Dorsolateral prefrontal cortex (tissue), 120 donors: ENCODE measurements at regions of chr1 and their contacts with region 1.

Region 1: DNA sequence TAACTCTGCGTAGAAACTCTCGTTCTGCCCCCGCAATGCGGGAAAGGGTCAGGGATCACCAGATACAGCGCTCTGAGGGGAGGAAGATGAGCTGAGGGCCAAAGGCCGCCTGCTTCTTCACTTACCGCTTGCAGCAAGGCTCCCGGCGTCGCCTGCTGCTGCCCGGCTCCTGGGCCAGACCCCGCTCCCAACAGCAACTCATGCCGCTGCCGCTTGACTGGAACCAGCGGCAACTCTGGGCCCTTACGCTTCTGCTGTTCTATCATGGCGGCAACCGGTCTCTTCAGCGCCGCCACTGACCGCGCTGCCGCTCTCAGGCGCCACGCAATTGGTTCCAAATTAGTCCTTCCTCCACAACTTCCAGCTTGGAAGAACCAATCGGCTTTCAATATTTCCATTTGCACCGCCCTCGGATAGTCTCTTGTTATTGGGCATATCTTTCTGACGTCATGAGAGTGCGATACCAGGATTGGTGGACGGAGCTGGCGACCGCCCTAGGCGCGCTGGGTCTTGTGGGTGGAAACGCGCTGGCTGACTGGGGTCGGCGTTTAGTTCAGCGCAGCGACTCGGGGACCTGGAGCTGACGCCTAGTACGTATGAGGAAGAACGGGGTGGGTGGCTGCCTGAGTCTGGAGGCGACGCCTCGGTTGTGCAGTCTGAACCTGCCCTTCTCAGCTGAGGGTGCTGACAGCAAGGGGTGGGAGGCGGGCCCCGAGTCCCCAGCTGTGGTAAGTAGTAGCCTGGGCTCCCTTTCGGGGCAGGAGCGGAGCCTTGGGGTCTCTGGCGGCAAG is at the starts of genes SNRNP40 and ZCCHC17:
- DNase-seq: peak; percentile 80 to 97 (median 94)
- H3K4me3 ChIP-seq: peak within 1 kb of the TSS; percentile 55 to 100 (median 94)
- H3K27ac ChIP-seq: peak within 1 kb of the TSS in 58 of 59 donors; percentile 8 to 97 (median 86)
- H3K27me3 ChIP-seq: no peaks in the 10 kb centered on the region
- CTCF ChIP-seq: peak in 54 of 56 donors; percentile 17 to 76 (median 48)
- total RNA-seq, gene SNRNP40: 28.0 to 64.2 (median 38.5) TPM
- total RNA-seq, gene ZCCHC17: 27.3 to 71.7 (median 48.5) TPM

Region 2: DNA sequence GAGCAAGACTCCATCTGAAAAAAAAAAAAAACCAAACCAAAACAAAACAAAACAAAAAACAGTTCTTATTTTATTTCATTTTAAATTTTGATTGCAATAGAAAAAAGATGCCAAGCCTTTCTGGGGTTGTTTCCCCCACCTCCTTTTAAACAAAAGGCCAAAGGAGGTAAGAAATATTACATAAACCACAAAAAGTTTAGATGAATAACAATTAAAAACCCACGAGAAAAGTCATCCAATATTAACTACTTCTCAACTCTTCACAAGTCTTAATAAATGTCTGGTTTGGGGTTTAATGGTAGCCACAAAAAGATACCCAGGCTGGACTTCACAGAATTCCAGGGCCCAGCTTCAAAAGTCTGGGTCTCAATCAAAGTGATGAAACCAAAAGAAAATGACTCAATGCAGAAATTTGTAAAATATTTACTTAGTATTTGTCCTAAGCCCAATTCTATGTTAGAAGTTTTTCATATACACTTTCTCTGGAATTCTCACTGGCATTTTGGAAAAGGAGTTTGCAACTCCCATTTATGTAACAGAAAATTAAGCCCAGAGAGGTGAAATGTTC is 341.1 kb before region 1 on chr1:
- intact Hi-C with region 1: no loop called
- DNase-seq: no peak
- H3K4me3 ChIP-seq: no peak overlapping the region
- H3K27ac ChIP-seq: no peak overlapping the region
- H3K27me3 ChIP-seq: no peaks in the 10 kb centered on the region
- CTCF ChIP-seq: no peak

Region 3: GRCh38 chr1:31182352-31182751 is 114.3 kb before region 1 on chr1:
- intact Hi-C with region 1: loop called (anchors 2 to 5 kb)
- DNase-seq: peak in 9 of 10 donors; percentile 26 to 85 (median 58)
- H3K4me3 ChIP-seq: peak overlapping the region in 55 of 59 donors; percentile 8 to 64 (median 42)
- H3K27ac ChIP-seq: peak overlapping the region in 9 of 59 donors; percentile 11 to 68 (median 36)
- H3K27me3 ChIP-seq: no peaks in the 10 kb centered on the region
- CTCF ChIP-seq: peak in 32 of 56 donors; percentile 8 to 47 (median 30)

Region 4: GRCh38 chr1:31239653-31240241 is 56.9 kb before region 1 on chr1 and contains the start of gene NKAIN1:
- intact Hi-C with region 1: loop called in 1 of 2 experiments (anchors 10 kb)
- DNase-seq: peak in 3 of 10 donors; percentile 24 to 72 (median 58)
- H3K4me3 ChIP-seq: peak within 1 kb of the TSS; percentile 28 to 76 (median 58)
- H3K27ac ChIP-seq: peak within 1 kb of the TSS in 30 of 59 donors; percentile 3 to 74 (median 48)
- H3K27me3 ChIP-seq: peaks cover 0 to 29% (median 0%) of the 10 kb centered on the region in 45 donors
- CTCF ChIP-seq: peak in 2 of 56 donors; percentile 11 to 26
- total RNA-seq, gene NKAIN1: 3.6 to 42.1 (median 11.7) TPM

Region 5: GRCh38 chr1:31372961-31373896 is 76.5 kb after region 1 on chr1 and contains the start of gene FABP3:
- intact Hi-C with region 1: loop called in 1 of 2 experiments (anchors 10 kb)
- DNase-seq: peak; percentile 60 to 91 (median 85)
- H3K4me3 ChIP-seq: peak within 1 kb of the TSS; percentile 29 to 83 (median 64)
- H3K27ac ChIP-seq: peak within 1 kb of the TSS; percentile 75 to 99 (median 96)
- H3K27me3 ChIP-seq: no peaks in the 10 kb centered on the region
- CTCF ChIP-seq: peak in 15 of 56 donors; percentile 2 to 36 (median 20)
- total RNA-seq, gene FABP3: 26.6 to 202 (median 90.7) TPM

Region 6: DNA sequence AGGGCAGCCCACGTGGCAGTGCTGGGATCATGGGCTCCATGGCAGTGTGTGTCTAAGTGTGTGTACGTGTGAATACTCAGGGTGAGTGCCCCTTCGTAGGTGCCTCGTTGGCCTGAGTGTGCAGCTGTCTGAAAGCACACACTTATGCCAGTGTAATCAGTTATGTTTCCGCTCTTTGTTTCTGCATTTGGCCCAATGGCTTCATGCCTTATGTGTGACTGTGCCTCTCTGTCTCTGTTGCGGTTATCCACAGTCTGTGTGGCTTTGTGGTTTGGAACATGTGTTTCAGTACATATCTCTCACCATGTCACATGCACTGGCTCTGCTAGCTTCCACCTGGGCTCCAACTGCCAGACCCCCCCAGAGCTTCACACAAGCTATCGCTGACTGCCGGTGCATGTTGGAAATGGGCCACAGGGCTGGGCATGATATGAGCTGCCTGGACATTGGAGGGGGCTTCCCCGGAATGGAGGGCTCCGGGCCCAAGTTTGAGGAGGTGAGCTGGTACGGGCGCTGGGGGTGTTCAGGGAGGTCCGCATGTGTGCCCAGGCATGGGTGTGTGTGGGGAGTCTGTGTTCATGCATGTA is 209.3 kb after region 1 on chr1:
- intact Hi-C with region 1: no loop called
- DNase-seq: no peak
- H3K4me3 ChIP-seq: no peak overlapping the region
- H3K27ac ChIP-seq: no peak overlapping the region
- H3K27me3 ChIP-seq: peaks cover 0 to 5% (median 0%) of the 10 kb centered on the region in 45 donors
- CTCF ChIP-seq: no peak